Ovary (tissue), 10 donors: ENCODE measurements at regions of chr16 and their contacts with region 1.

Region 1: GRCh38 chr16:2155091-2156021 is at the start of gene TRAF7:
- DNase-seq: peak; percentile 97 to 99 (median 97)
- H3K4me3 ChIP-seq: peak within 1 kb of the TSS; percentile 84
- H3K27ac ChIP-seq: peak within 1 kb of the TSS in 1 of 2 donors; percentile 65
- H3K4me1 ChIP-seq: peaks cover 23% of the 10 kb centered on the region
- H3K27me3 ChIP-seq: no peaks in the 10 kb centered on the region
- CTCF ChIP-seq: peak in 2 of 3 donors; percentile 6 to 7
- EP300 ChIP-seq: peak; percentile 70
- POLR2A ChIP-seq: peak; percentile 99
- total RNA-seq, gene TRAF7: 20.5 to 68.0 (median 48.0) TPM

Region 2: GRCh38 chr16:931626-932500 is 1223.5 kb before region 1 on chr16:
- intact Hi-C with region 1: no loop called
- DNase-seq: no peak
- H3K4me3 ChIP-seq: no peak overlapping the region
- H3K27ac ChIP-seq: no peak overlapping the region
- H3K4me1 ChIP-seq: no peaks in the 10 kb centered on the region
- H3K27me3 ChIP-seq: no peaks in the 10 kb centered on the region
- CTCF ChIP-seq: no peak
- EP300 ChIP-seq: no peak
- POLR2A ChIP-seq: no peak

Region 3: GRCh38 chr16:2023098-2023925 is 132.0 kb before region 1 on chr16:
- intact Hi-C with region 1: loop called in 1 of 4 experiments (anchors 5 kb)
- DNase-seq: peak; percentile 88 to 97 (median 94)
- H3K4me3 ChIP-seq: peak overlapping the region; percentile 31
- H3K27ac ChIP-seq: peak overlapping the region; percentile 24 to 37
- H3K4me1 ChIP-seq: peaks cover 17% of the 10 kb centered on the region
- H3K27me3 ChIP-seq: no peaks in the 10 kb centered on the region
- CTCF ChIP-seq: peak; percentile 93 to 99 (median 99)
- EP300 ChIP-seq: no peak
- POLR2A ChIP-seq: peak; percentile 41

Region 4: DNA sequence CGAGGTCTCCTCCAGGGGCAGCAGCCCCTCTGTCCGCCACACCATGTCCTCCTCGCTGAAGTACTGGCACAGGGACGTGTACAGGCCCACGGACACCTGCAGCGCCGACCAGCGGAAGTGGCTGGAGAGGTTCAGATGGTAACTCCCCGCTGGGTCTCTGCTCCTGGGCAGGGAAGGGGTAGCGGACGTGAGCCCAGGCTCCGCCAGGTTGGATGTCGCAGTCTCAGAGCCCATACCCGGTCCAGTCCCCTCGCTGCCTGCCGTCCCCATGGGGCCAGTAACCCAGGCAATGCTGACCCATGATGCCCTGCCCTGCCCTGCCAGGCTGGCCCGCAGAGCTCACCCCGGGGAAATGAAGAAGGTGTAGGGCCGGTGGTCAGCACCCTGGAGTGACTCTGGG is 52.9 kb before region 1 on chr16:
- intact Hi-C with region 1: no loop called
- DNase-seq: no peak
- H3K4me3 ChIP-seq: no peak overlapping the region
- H3K27ac ChIP-seq: no peak overlapping the region
- H3K4me1 ChIP-seq: no peaks in the 10 kb centered on the region
- H3K27me3 ChIP-seq: no peaks in the 10 kb centered on the region
- CTCF ChIP-seq: no peak
- EP300 ChIP-seq: no peak
- POLR2A ChIP-seq: no peak

Region 5: GRCh38 chr16:2121853-2122252 is 33.5 kb before region 1 on chr16:
- intact Hi-C with region 1: no loop called
- DNase-seq: peak in 1 of 5 donors; percentile 37
- H3K4me3 ChIP-seq: peak overlapping the region; percentile 22
- H3K27ac ChIP-seq: peak overlapping the region; percentile 52 to 96
- H3K4me1 ChIP-seq: peaks cover 21% of the 10 kb centered on the region
- H3K27me3 ChIP-seq: no peaks in the 10 kb centered on the region
- CTCF ChIP-seq: no peak
- EP300 ChIP-seq: no peak
- POLR2A ChIP-seq: no peak

Region 6: DNA sequence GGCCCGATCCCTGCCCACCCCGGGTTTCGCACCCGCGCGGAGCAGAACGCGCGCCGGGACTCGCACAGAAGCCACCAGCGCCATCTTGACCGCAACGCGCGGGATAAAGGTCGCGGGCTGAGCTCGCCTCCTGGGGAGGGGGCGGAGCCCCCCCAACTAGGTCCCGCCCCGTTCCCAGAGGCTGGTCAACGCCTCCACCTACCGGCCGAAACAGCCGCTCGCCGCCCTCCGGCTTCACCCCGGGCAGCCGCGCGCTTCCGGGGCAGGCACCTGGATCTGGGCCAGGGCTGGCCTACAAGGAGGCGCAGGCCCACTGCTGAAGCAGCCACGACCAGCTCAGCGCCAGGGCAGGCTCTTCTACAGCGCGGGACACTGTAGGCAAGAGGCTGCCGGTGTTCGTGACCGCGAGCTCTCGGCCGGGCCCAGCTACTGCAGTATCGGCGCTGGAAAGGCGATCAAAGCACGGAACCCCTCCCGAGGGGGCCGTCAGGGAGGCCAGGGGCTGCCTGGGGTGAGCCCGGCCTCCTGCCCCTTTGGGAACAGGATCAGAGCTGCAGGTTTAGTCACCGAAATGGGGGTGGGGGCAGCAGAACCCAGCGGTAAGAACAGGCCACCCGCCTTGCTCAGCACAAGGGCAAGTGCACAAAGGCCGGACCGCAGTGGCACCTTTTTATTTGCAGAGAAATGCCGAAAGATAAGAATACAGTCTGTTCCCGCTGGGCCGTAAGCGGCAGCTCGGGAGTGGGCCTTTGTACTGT is 96.3 kb after region 1 on chr16 and contains the start of gene ECI1:
- intact Hi-C with region 1: loop called in 1 of 4 experiments (anchors 10 kb)
- DNase-seq: peak; percentile 96 to 98 (median 97)
- H3K4me3 ChIP-seq: peak within 1 kb of the TSS; percentile 46
- H3K27ac ChIP-seq: peak within 1 kb of the TSS; percentile 77 to 78
- H3K4me1 ChIP-seq: peaks cover 2% of the 10 kb centered on the region
- H3K27me3 ChIP-seq: no peaks in the 10 kb centered on the region
- CTCF ChIP-seq: peak; percentile 74 to 95 (median 86)
- EP300 ChIP-seq: no peak
- POLR2A ChIP-seq: peak; percentile 68
- total RNA-seq, gene ECI1: 39.0 to 66.3 (median 51.3) TPM